HCT116 (cell line): ENCODE measurements at regions of chr5 and their contacts with region 1.

Region 1: GRCh38 chr5:10452768-10453331 is 11.2 kb downstream of the ROPN1L start:
- DNase-seq: peak; percentile 70
- ATAC-seq: peak; percentile 80
- H3K4me3 ChIP-seq: no peak overlapping the region
- H3K27ac ChIP-seq: no peak overlapping the region
- H3K4me1 ChIP-seq: peaks cover 6 to 26% of the 10 kb centered on the region in 2 experiments
- H3K27me3 ChIP-seq: no peaks in the 10 kb centered on the region
- CTCF ChIP-seq: peak; percentile 62 to 88 (median 82)
- POLR2A ChIP-seq: no peak
- RAD21 ChIP-seq: peak; percentile 95

Region 2: GRCh38 chr5:10627160-10627701 is 174.4 kb after region 1 on chr5:
- CTCF ChIA-PET with region 1: interaction called, 94 read pairs
- POLR2A ChIA-PET with region 1: no interaction called
- RAD21 ChIA-PET with region 1: interaction called, 21 to 37 read pairs
- intact Hi-C with region 1: loop called (anchors 1 kb)
- DNase-seq: no peak
- ATAC-seq: peak; percentile 5
- H3K4me3 ChIP-seq: peak overlapping the region; percentile 27 to 43
- H3K27ac ChIP-seq: 0 out of 2 replicates have a peak overlapping the region, but pooled peaks have one; percentile 32
- H3K4me1 ChIP-seq: peaks cover 17 to 52% of the 10 kb centered on the region in 2 experiments
- H3K27me3 ChIP-seq: no peaks in the 10 kb centered on the region
- CTCF ChIP-seq: no peak
- POLR2A ChIP-seq: no peak
- RAD21 ChIP-seq: no peak

Region 3: GRCh38 chr5:10663489-10664179 is 210.8 kb after region 1 on chr5:
- CTCF ChIA-PET with region 1: no interaction called
- POLR2A ChIA-PET with region 1: no interaction called
- RAD21 ChIA-PET with region 1: no interaction called
- intact Hi-C with region 1: no loop called
- DNase-seq: no peak
- ATAC-seq: no peak
- H3K4me3 ChIP-seq: no peak overlapping the region
- H3K27ac ChIP-seq: no peak overlapping the region
- H3K4me1 ChIP-seq: peaks cover 0 to 23% of the 10 kb centered on the region in 2 experiments; a peak in 2 of 4 replicates
- H3K27me3 ChIP-seq: no peaks in the 10 kb centered on the region
- CTCF ChIP-seq: no peak
- POLR2A ChIP-seq: no peak
- RAD21 ChIP-seq: no peak

Region 4: GRCh38 chr5:10689391-10690081 is 236.7 kb after region 1 on chr5:
- CTCF ChIA-PET with region 1: interaction called, 6 read pairs
- POLR2A ChIA-PET with region 1: no interaction called
- RAD21 ChIA-PET with region 1: interaction called in 1 of 2 experiments, 3 read pairs
- intact Hi-C with region 1: loop called (anchors 1 kb)
- DNase-seq: no peak
- ATAC-seq: peak; percentile 79
- H3K4me3 ChIP-seq: no peak overlapping the region
- H3K27ac ChIP-seq: no peak overlapping the region
- H3K4me1 ChIP-seq: peaks cover 0 to 19% of the 10 kb centered on the region in 2 experiments; a peak in 2 of 4 replicates
- H3K27me3 ChIP-seq: no peaks in the 10 kb centered on the region
- CTCF ChIP-seq: peak; percentile 46 to 64 (median 63); a peak in 5 of 6 replicates
- POLR2A ChIP-seq: no peak
- RAD21 ChIP-seq: peak; percentile 62

Region 5: GRCh38 chr5:10987930-10988504 is 535.2 kb after region 1 on chr5:
- CTCF ChIA-PET with region 1: no interaction called
- POLR2A ChIA-PET with region 1: no interaction called
- RAD21 ChIA-PET with region 1: no interaction called
- intact Hi-C with region 1: loop called (anchors 5 kb)
- DNase-seq: peak; percentile 42
- ATAC-seq: peak; percentile 99
- H3K4me3 ChIP-seq: no peak overlapping the region
- H3K27ac ChIP-seq: no peak overlapping the region
- H3K4me1 ChIP-seq: no peaks in the 10 kb centered on the region
- H3K27me3 ChIP-seq: peaks cover 31% of the 10 kb centered on the region; the same call in 1 of the 2 replicates
- CTCF ChIP-seq: peak; percentile 68 to 95 (median 91)
- POLR2A ChIP-seq: no peak
- RAD21 ChIP-seq: peak; percentile 65

Region 6: GRCh38 chr5:11182441-11183268 is 729.8 kb after region 1 on chr5:
- CTCF ChIA-PET with region 1: interaction called, 3 read pairs
- POLR2A ChIA-PET with region 1: no interaction called
- RAD21 ChIA-PET with region 1: no interaction called
- intact Hi-C with region 1: loop called (anchors 1 kb)
- DNase-seq: peak; percentile 18
- ATAC-seq: peak; percentile 47; the same call in 1 of the 2 replicates
- H3K4me3 ChIP-seq: no peak overlapping the region
- H3K27ac ChIP-seq: no peak overlapping the region
- H3K4me1 ChIP-seq: no peaks in the 10 kb centered on the region
- H3K27me3 ChIP-seq: 0 out of 2 replicates have a peak, but pooled peaks cover 4% of the 10 kb centered on the region
- CTCF ChIP-seq: peak; percentile 26 to 64 (median 57); a peak in 5 of 6 replicates
- POLR2A ChIP-seq: no peak
- RAD21 ChIP-seq: peak; percentile 47

Region 7: DNA sequence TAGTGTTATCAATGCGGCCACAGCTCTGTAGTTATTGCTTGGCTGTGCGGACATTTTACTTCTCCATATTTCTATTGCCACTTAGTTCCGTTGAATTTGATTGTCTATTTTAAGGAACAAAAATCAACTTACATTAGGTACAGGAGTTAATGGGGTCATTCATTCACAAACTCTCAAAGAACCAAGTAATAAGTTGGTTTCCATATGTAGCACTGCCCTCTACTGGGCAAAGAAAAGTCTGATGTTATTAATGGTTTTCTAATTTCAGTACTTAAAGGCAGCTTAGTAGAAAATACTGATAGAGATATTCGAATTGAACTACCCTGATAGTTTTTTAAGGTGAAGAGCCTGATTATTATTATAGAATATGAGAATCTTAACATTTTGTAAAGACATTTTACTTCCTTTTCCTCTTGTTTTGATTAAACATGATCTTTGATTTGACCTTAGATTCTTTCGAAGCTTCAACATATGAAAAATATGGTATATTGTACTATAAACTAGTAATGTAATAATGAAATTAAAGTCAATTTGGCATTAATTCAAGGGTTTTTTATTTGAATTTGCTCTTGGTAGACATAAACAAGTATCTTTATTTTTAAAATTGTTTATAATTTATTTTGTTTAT is 1570.9 kb after region 1 on chr5:
- CTCF ChIA-PET with region 1: no interaction called
- POLR2A ChIA-PET with region 1: no interaction called
- RAD21 ChIA-PET with region 1: no interaction called
- intact Hi-C with region 1: loop called (anchors 5 kb)
- DNase-seq: no peak
- ATAC-seq: no peak
- H3K4me3 ChIP-seq: no peak overlapping the region
- H3K27ac ChIP-seq: no peak overlapping the region
- H3K4me1 ChIP-seq: no peaks in the 10 kb centered on the region
- H3K27me3 ChIP-seq: no peaks in the 10 kb centered on the region
- CTCF ChIP-seq: peak; percentile 7 to 64 (median 45); a peak in 4 of 6 replicates
- POLR2A ChIP-seq: no peak
- RAD21 ChIP-seq: peak; percentile 23; the same call in 1 of the 2 replicates